Motor neuron (in vitro differentiated cells): ENCODE measurements at regions of chr3 and their contacts with region 1.

Region 1: GRCh38 chr3:182713743-182714517 is 79.4 kb upstream of the ATP11B start:
- ATAC-seq: peak; percentile 61 to 88 (median 82)
- H3K4me3 ChIP-seq: no peak overlapping the region
- H3K27ac ChIP-seq: no peak overlapping the region
- H3K4me1 ChIP-seq: no peaks in the 10 kb centered on the region

Region 2: DNA sequence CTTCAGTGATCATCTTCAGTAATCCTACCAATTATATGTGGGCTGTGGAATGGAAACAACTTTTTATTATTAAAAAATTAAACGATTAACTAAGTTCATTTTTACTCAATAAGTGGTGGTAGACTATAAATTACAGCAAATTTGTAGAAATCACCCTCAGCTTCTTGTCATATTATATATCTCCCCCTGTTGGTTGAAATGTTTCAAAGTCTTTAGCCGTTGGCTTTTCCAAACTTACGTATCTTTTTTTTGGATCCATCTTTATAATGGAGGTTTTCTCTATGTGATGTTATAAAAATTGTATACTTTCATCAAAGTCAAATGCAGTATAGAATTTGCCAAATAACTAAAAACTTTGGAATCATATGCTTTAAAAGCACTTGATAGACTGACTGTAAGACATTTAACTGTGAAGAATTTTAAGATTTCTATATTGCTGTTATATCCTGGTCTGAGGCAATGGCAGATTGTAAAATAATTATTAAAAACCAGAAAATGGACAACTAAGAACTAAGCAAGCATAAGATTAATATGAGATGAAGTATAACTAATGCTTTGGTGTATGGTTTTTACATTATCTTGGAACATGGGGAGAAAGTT is 124.0 kb after region 1 on chr3:
- in situ Hi-C with region 1: loop called in 2 of 9 experiments (anchors 10 to 25 kb)
- ATAC-seq: no peak
- H3K4me3 ChIP-seq: no peak overlapping the region
- H3K27ac ChIP-seq: no peak overlapping the region
- H3K4me1 ChIP-seq: no peaks in the 10 kb centered on the region

Region 3: GRCh38 chr3:182980204-182981037 is 266.5 kb after region 1 on chr3 and contains the start of gene DCUN1D1:
- in situ Hi-C with region 1: loop called in 1 of 9 experiments (anchors 25 kb)
- ATAC-seq: peak; percentile 92 to 98 (median 96)
- H3K4me3 ChIP-seq: peak within 1 kb of the TSS; percentile 80 to 100 (median 91)
- H3K27ac ChIP-seq: peak within 1 kb of the TSS; percentile 63 to 64
- H3K4me1 ChIP-seq: peaks cover 3 to 12% of the 10 kb centered on the region in 2 donors
- total RNA-seq, gene DCUN1D1: 15.2 to 29.6 (median 24.4) TPM